Activated CD4-positive, alpha-beta T cell treated with anti-CD3 and anti-CD28 coated beads for 36 hours (primary cell): ENCODE measurements at regions of chr19 and their contacts with region 1.

Region 1: GRCh38 chr19:54102421-54103169 is at the start of gene NDUFA3:
- DNase-seq: peak; percentile 98
- ATAC-seq: peak; percentile 99
- H3K4me3 Mint-ChIP-seq: peak within 1 kb of the TSS; percentile 93
- H3K27ac Mint-ChIP-seq: peak within 1 kb of the TSS; percentile 96
- H3K4me1 Mint-ChIP-seq: peaks cover 16% of the 10 kb centered on the region
- H3K27me3 Mint-ChIP-seq: no peaks in the 10 kb centered on the region
- total RNA-seq, gene NDUFA3: 99.9 to 158 TPM

Region 2: DNA sequence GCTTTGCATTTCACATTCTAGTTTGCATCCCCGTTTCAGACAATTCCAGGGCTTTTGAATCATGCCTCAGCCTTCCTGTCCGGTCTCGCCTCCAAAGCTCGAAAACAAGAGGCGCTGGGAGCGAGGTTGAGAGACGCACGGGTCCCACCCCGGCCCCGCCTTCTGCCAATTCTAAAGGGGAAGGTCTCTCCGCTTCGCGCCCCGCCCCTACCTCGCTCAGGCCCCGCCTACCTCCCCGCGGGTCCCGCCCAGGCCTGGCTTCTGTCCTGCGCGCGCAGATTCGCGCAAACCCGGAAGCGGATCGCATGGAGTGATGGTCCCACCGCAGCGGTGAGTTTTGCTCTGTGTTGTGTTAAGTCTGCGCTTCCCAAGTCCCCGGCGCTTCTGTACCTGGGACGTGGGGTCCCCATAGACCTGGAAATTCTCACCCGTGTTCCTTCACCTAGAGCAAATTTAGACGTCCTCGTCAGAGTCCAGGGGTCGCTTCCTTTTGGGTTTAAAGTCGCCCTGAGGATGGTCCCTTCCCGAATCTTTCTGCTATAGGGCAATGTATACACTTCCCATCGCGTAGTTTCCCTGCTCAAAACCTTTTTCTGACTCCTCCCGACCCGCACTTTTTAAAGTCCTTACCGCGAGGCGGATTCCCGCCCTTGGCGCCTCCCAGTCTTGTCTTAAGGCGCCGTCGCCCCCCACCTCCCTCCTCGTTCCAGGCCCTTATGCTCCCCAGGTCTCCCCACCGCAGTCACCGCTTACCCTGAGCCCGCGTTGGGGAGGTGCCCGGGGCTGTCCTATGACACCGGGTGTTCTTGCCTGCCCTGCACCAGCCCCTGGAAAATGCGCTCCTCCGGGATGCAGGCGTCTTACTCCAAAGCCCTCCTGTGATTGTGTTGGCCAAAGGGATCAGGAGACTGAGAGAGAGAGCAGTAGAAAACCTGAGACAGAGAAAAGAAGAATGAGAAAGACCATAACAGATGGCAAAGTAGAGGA is 768.8 kb before region 1 on chr19 and contains the start of gene ZNF845:
- CTCF ChIA-PET with region 1: no interaction called
- POLR2A ChIA-PET with region 1: no interaction called
- intact Hi-C with region 1: loop called in 1 of 2 experiments (anchors 2 kb)
- DNase-seq: peak; percentile 97
- ATAC-seq: peak; percentile 99
- H3K4me3 Mint-ChIP-seq: peak within 1 kb of the TSS; percentile 88
- H3K27ac Mint-ChIP-seq: peak within 1 kb of the TSS; percentile 92
- H3K4me1 Mint-ChIP-seq: peaks cover 10% of the 10 kb centered on the region
- H3K27me3 Mint-ChIP-seq: peaks cover 5% of the 10 kb centered on the region
- total RNA-seq, gene ZNF845: 5.9 to 6.3 TPM

Region 3: GRCh38 chr19:53879140-53880081 is 223.2 kb before region 1 on chr19:
- CTCF ChIA-PET with region 1: no interaction called
- POLR2A ChIA-PET with region 1: no interaction called
- intact Hi-C with region 1: loop called in 1 of 2 experiments (anchors 1 kb)
- DNase-seq: peak; percentile 91
- ATAC-seq: peak; percentile 91
- H3K4me3 Mint-ChIP-seq: no peak overlapping the region
- H3K27ac Mint-ChIP-seq: peak overlapping the region; percentile 9
- H3K4me1 Mint-ChIP-seq: peaks cover 50% of the 10 kb centered on the region
- H3K27me3 Mint-ChIP-seq: peaks cover 11% of the 10 kb centered on the region

Region 4: GRCh38 chr19:53977429-53977990 is 125.1 kb before region 1 on chr19:
- CTCF ChIA-PET with region 1: no interaction called
- POLR2A ChIA-PET with region 1: no interaction called
- intact Hi-C with region 1: loop called in 1 of 2 experiments (anchors 2 kb)
- DNase-seq: peak; percentile 79
- ATAC-seq: peak; percentile 61
- H3K4me3 Mint-ChIP-seq: peak overlapping the region; percentile 59
- H3K27ac Mint-ChIP-seq: no peak overlapping the region
- H3K4me1 Mint-ChIP-seq: peaks cover 30% of the 10 kb centered on the region
- H3K27me3 Mint-ChIP-seq: peaks cover 53% of the 10 kb centered on the region

Region 5: GRCh38 chr19:54115109-54116063 is 12.8 kb after region 1 on chr19 and contains the starts of genes PRPF31 and TFPT:
- CTCF ChIA-PET with region 1: interaction called, 4 read pairs
- POLR2A ChIA-PET with region 1: interaction called, 9 read pairs
- intact Hi-C with region 1: loop called (anchors 1 kb)
- DNase-seq: peak; percentile 97
- ATAC-seq: peak; percentile 94
- H3K4me3 Mint-ChIP-seq: peak within 1 kb of the TSS; percentile 83
- H3K27ac Mint-ChIP-seq: peak within 1 kb of the TSS; percentile 96
- H3K4me1 Mint-ChIP-seq: peaks cover 25% of the 10 kb centered on the region
- H3K27me3 Mint-ChIP-seq: no peaks in the 10 kb centered on the region
- total RNA-seq, gene PRPF31: 85.5 to 115 TPM
- total RNA-seq, gene TFPT: 28.5 to 39.3 TPM

Region 6: DNA sequence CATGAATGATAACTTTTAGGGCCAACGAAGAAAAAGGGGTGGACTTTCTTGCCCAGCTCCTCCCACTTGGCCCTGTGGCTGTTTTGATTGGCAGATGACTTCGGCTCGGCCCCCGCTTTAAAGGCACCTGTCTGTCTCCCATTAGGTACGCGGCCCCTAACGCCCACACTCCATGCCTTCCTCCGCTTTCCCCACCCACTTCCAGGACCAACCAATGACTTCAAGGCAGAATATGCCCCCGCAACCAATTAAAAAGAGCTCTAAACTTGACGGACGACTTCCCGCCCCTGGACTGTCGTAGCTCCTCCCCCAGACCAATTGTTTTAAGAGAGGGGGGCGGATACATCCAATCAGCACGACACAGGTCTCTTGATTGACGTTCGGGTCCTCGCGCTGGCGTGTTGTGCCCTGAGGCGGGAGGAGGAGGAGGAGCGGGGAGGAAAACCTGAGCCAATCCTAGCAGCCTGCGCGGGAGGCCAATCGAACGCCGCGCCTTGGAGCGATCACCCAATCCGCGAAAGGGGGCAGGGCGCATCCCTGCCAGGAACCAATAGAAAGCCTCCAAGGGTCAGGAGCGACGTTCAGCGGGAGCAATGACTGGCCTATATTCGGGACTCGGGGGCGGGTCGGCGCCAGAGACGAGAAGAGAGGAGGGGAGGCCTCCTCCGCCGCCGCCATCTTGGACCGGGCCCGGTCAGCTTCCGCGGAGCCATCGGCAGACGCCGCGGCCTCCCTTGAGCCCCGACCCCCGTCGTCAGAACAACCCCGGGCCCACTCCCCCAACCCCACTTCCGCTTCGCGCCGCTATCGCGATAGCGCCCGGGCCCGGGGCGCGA is 34.7 kb after region 1 on chr19 and contains the start of gene CNOT3:
- CTCF ChIA-PET with region 1: interaction called, 5 read pairs
- POLR2A ChIA-PET with region 1: no interaction called
- intact Hi-C with region 1: loop called (anchors 1 kb)
- DNase-seq: peak; percentile 99
- ATAC-seq: peak; percentile 86
- H3K4me3 Mint-ChIP-seq: peak within 1 kb of the TSS; percentile 83
- H3K27ac Mint-ChIP-seq: peak within 1 kb of the TSS; percentile 91
- H3K4me1 Mint-ChIP-seq: peaks cover 44% of the 10 kb centered on the region
- H3K27me3 Mint-ChIP-seq: no peaks in the 10 kb centered on the region
- total RNA-seq, gene CNOT3: 61.0 to 93.8 TPM

Region 7: DNA sequence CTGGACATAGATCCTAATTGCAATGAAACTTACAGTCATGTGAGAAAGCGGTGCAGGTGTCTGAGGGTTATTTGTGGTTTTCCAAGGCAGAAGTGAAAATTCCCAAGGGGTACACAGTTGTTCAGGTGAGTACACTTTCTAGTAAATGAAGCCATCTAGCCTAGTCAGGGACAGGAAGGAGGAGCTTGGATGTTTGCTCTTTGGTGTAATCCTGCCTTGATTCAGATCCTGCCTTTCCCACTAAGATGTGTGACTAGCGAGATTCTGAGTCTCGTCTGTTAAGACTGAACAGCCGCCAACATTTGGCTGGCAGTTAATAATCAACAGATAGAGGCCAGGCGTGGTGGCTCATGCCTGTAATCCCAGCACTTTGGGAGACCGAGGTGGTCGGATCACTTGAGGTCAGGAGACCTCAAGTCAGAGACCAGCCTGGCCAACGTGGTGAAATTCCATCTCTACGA is 100.6 kb after region 1 on chr19:
- CTCF ChIA-PET with region 1: no interaction called
- POLR2A ChIA-PET with region 1: interaction called, 3 read pairs
- intact Hi-C with region 1: loop called (anchors 1 to 2 kb)
- DNase-seq: no peak
- ATAC-seq: no peak
- H3K4me3 Mint-ChIP-seq: peak overlapping the region; percentile 97
- H3K27ac Mint-ChIP-seq: peak overlapping the region; percentile 100
- H3K4me1 Mint-ChIP-seq: peaks cover 67% of the 10 kb centered on the region
- H3K27me3 Mint-ChIP-seq: no peaks in the 10 kb centered on the region